CD14-positive monocyte (primary cell): ENCODE measurements at regions of chr3 and their contacts with region 1.

Region 1: GRCh38 chr3:119293871-119294695 is at the start of gene ARHGAP31:
- DNase-seq: peak; percentile 85 to 92 (median 88)
- H3K4me3 ChIP-seq: peak within 1 kb of the TSS; percentile 64 to 94 (median 76)
- H3K4me3 Mint-ChIP-seq: peak within 1 kb of the TSS; percentile 91 to 94
- H3K27ac ChIP-seq: peak within 1 kb of the TSS; percentile 96 to 97
- H3K27ac Mint-ChIP-seq: peak within 1 kb of the TSS; percentile 91 to 97 (median 95)
- H3K4me1 ChIP-seq: peaks cover 33 to 46% of the 10 kb centered on the region in 2 donors
- H3K4me1 Mint-ChIP-seq: peaks cover 49% of the 10 kb centered on the region
- H3K27me3 ChIP-seq: peaks cover 0 to 2% of the 10 kb centered on the region in 2 donors
- H3K27me3 Mint-ChIP-seq: peaks cover 0 to 4% (median 3%) of the 10 kb centered on the region in 3 donors
- CTCF ChIP-seq: no peak
- polyA plus RNA-seq, gene ARHGAP31: 4.7 to 9.8 (median 7.6) TPM

Region 2: DNA sequence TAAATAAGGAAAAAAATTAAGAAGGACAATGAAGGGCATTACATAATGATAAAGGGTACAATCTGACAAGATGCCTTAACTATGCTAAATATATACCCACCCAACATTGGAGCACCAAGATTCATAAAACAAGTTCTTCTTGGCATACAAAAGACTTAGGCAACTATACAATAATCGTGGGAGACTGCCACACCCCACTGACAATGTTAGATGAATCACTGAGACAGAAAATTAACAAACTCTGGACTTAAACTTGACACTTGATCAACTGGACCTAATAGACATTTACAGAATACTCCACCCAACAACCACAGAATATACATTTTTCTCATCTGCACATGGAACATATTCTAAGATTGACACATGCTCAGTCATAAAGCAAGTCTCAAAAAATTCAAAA is 206.3 kb before region 1 on chr3:
- intact Hi-C with region 1: no loop called
- DNase-seq: no peak
- H3K4me3 ChIP-seq: no peak overlapping the region
- H3K4me3 Mint-ChIP-seq: peak overlapping the region in 1 of 2 donors; percentile 8
- H3K27ac ChIP-seq: no peak overlapping the region
- H3K27ac Mint-ChIP-seq: no peak overlapping the region
- H3K4me1 ChIP-seq: no peaks in the 10 kb centered on the region
- H3K4me1 Mint-ChIP-seq: no peaks in the 10 kb centered on the region
- H3K27me3 ChIP-seq: no peaks in the 10 kb centered on the region
- H3K27me3 Mint-ChIP-seq: peaks cover 2 to 7% (median 4%) of the 10 kb centered on the region in 3 donors
- CTCF ChIP-seq: no peak

Region 3: DNA sequence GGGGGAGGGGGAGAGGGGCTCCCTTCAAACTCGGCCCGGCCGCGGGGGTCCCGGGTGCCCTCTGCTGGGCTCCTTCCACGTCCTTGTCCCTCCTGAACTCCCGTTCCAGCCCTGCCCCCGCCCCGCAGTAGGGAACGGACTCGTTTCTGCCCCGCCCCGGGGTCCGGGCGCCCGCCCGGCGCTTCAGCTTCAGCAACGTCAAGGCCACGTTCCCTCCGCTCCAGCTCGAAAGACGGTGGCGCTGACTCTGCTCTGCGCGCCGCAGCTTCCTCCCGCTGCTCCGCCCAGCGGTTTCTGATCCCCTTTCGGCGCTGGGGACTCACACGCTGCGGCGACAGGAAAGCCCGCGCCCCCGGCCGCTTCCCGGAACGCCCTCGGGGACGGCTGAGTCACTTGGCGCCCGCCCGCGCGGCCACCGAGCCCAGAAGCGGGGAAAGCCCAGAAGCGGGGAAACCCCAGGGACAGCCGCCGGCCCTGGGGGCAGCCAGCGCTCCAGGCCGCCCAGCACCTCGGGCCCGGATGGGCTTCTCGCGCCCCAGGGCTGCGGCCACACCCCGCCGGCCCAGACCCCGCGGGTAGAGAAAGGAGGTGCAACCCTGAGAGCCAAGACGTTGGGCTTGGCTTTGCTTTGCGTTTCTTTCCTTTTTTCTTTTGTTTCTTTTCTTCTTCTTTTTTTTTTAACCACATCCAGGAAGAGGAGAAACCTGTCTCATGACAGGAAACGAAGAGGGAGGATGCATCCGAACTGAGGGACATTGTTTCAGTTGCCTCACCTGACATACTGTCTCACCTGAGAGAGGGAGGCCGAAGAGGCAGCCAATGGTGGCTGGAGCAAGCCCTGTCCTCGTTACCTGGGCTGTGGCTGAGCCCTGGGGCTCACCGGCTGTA is 29.0 kb after region 1 on chr3:
- intact Hi-C with region 1: loop called in 1 of 2 experiments (anchors 2 kb)
- DNase-seq: peak; percentile 97 to 98 (median 98)
- H3K4me3 ChIP-seq: peak overlapping the region; percentile 74 to 90 (median 85)
- H3K4me3 Mint-ChIP-seq: peak overlapping the region; percentile 88 to 93
- H3K27ac ChIP-seq: peak overlapping the region; percentile 98 to 100
- H3K27ac Mint-ChIP-seq: peak overlapping the region; percentile 98 to 99 (median 98)
- H3K4me1 ChIP-seq: peaks cover 28 to 37% of the 10 kb centered on the region in 2 donors
- H3K4me1 Mint-ChIP-seq: peaks cover 42% of the 10 kb centered on the region
- H3K27me3 ChIP-seq: no peaks in the 10 kb centered on the region
- H3K27me3 Mint-ChIP-seq: peaks cover 0 to 2% (median 0%) of the 10 kb centered on the region in 3 donors
- CTCF ChIP-seq: no peak

Region 4: GRCh38 chr3:119343719-119344118 is 49.6 kb after region 1 on chr3:
- intact Hi-C with region 1: loop called in 1 of 2 experiments (anchors 10 kb)
- DNase-seq: peak; percentile 24 to 47 (median 44)
- H3K4me3 ChIP-seq: no peak overlapping the region
- H3K4me3 Mint-ChIP-seq: no peak overlapping the region
- H3K27ac ChIP-seq: peak overlapping the region in 1 of 2 donors; percentile 43
- H3K27ac Mint-ChIP-seq: peak overlapping the region; percentile 26 to 79 (median 50)
- H3K4me1 ChIP-seq: peaks cover 7% of the 10 kb centered on the region in 2 donors
- H3K4me1 Mint-ChIP-seq: peaks cover 11% of the 10 kb centered on the region
- H3K27me3 ChIP-seq: no peaks in the 10 kb centered on the region
- H3K27me3 Mint-ChIP-seq: peaks cover 0 to 4% (median 0%) of the 10 kb centered on the region in 3 donors
- CTCF ChIP-seq: no peak